ENCODE measurements at regions of chr11 and their contacts with region 1.

Region 1: GRCh38 chr11:103091801-103092524 is at the start of gene DCUN1D5:
- DNase-seq: peak; percentile 98
- ATAC-seq: peak; percentile 97
- H3K4me3 Mint-ChIP-seq: peak within 1 kb of the TSS; percentile 89
- H3K27ac Mint-ChIP-seq: peak within 1 kb of the TSS; percentile 93
- H3K4me1 Mint-ChIP-seq: peaks cover 21% of the 10 kb centered on the region
- H3K27me3 Mint-ChIP-seq: peaks cover 18% of the 10 kb centered on the region
- CTCF ChIP-seq: no peak
- total RNA-seq, gene DCUN1D5: 75.6 to 98.2 TPM (median 75.9 TPM) in 3 replicates

Region 2: GRCh38 chr11:102994105-102994504 is 97.9 kb before region 1 on chr11:
- CTCF ChIA-PET with region 1: no interaction called
- POLR2A ChIA-PET with region 1: no interaction called
- DNase-seq: no peak
- ATAC-seq: no peak
- H3K4me3 Mint-ChIP-seq: no peak overlapping the region
- H3K27ac Mint-ChIP-seq: no peak overlapping the region
- H3K4me1 Mint-ChIP-seq: 0 out of 2 replicates have a peak, but pooled peaks cover 3% of the 10 kb centered on the region
- H3K27me3 Mint-ChIP-seq: no peaks in the 10 kb centered on the region
- CTCF ChIP-seq: no peak

Region 3: DNA sequence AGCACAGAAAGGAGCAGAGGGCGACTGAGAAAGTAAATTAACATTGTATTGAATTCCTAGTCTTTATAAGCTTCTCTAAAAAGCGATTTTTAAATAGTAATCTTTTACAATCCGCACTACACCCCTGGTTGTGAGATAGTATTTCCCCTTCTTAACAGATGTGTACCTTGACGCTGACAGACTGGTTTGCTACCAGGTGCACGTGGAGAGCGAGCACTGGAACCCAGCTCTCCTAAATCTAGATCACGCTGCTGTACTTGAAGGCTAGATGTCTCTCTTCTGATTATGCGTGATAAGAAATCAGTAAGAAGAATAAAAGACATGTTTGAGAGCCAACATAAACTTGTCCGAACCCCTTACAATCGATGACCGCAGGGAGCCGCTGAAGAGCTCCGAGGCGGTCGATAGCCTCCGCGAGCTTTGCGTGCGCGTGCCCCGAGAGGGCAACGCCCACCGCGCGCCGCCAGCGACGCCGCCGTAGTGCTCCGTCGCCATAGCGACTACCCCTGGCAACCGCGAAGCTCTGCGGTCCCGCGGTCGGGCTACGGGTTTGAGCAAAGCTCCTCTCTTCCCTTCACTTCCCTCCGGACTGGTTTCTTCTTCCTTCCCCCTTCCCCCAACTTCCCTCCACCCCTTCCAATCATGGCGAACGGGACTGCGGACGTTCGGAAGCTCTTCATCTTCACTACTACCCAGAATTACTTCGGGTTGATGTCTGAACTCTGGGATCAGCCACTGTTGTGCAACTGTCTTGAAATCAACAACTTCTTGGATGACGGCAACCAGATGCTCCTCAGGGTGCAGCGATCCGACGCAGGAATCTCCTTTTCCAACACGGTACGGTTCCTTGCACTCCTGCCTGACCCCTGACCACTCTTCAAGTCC is 17.2 kb after region 1 on chr11 and contains the start of gene DYNC2H1:
- CTCF ChIA-PET with region 1: interaction called, 36 read pairs
- POLR2A ChIA-PET with region 1: interaction called, 29 read pairs
- DNase-seq: peak; percentile 92
- ATAC-seq: peak; percentile 97
- H3K4me3 Mint-ChIP-seq: peak within 1 kb of the TSS; percentile 95
- H3K27ac Mint-ChIP-seq: peak within 1 kb of the TSS; percentile 85
- H3K4me1 Mint-ChIP-seq: peaks cover 17% of the 10 kb centered on the region
- H3K27me3 Mint-ChIP-seq: no peaks in the 10 kb centered on the region; the same call in 1 of the 2 replicates
- CTCF ChIP-seq: no peak
- total RNA-seq, gene DYNC2H1: 13.7 to 17.2 TPM (median 14.9 TPM) in 3 replicates

Region 4: DNA sequence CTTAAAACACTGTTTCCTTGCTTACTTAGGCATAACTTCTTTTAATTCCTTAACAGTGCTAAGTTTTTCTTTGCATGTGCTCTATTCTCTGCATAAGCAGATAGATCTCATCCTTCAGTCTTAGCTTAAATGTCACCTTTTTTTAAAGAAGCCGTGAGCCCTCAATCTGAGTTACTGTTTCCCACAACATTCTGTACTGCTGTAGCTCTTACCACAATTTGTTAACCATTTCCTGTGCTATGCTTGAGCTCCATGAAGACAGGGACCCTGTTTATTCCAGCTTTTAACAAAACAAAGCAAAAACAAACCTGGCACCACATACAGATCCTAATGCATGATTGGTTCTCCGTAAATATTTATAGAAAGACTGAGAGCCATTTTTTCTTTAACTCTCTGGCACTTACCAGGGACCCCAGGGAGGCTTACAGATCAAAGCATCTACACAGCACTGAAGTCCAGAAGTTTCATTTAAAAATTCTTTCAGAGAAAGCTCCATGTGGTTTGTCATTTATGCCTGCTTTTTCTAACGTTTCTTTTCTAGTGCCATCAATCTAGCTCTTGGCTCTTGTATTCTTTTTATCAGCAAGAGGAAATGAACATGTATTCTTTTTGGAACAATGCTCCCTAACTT is 92.1 kb after region 1 on chr11:
- CTCF ChIA-PET with region 1: no interaction called
- POLR2A ChIA-PET with region 1: no interaction called
- DNase-seq: no peak
- ATAC-seq: peak; percentile 75
- H3K4me3 Mint-ChIP-seq: no peak overlapping the region
- H3K27ac Mint-ChIP-seq: no peak overlapping the region
- H3K4me1 Mint-ChIP-seq: peaks cover 11% of the 10 kb centered on the region
- H3K27me3 Mint-ChIP-seq: peaks cover 5% of the 10 kb centered on the region; the same call in 1 of the 2 replicates
- CTCF ChIP-seq: no peak